B cell (primary cell): ENCODE measurements at regions of chrX and their contacts with region 1.

Region 1: GRCh38 chrX:48917139-48918001 is 1.5 kb downstream of the PIM2 start:
- DNase-seq: peak; percentile 92
- ATAC-seq: peak; percentile 46
- H3K4me3 ChIP-seq: peak overlapping the region; percentile 67 to 94 (median 86)
- H3K4me3 Mint-ChIP-seq: peak overlapping the region; percentile 98
- H3K27ac ChIP-seq: peak overlapping the region; percentile 84
- H3K27ac Mint-ChIP-seq: peak overlapping the region; percentile 96
- H3K4me1 ChIP-seq: peaks cover 34 to 56% of the 10 kb centered on the region in 2 donors
- H3K4me1 Mint-ChIP-seq: peaks cover 51% of the 10 kb centered on the region
- H3K27me3 ChIP-seq: no peaks in the 10 kb centered on the region
- H3K27me3 Mint-ChIP-seq: no peaks in the 10 kb centered on the region
- CTCF ChIP-seq: peak; percentile 74

Region 2: DNA sequence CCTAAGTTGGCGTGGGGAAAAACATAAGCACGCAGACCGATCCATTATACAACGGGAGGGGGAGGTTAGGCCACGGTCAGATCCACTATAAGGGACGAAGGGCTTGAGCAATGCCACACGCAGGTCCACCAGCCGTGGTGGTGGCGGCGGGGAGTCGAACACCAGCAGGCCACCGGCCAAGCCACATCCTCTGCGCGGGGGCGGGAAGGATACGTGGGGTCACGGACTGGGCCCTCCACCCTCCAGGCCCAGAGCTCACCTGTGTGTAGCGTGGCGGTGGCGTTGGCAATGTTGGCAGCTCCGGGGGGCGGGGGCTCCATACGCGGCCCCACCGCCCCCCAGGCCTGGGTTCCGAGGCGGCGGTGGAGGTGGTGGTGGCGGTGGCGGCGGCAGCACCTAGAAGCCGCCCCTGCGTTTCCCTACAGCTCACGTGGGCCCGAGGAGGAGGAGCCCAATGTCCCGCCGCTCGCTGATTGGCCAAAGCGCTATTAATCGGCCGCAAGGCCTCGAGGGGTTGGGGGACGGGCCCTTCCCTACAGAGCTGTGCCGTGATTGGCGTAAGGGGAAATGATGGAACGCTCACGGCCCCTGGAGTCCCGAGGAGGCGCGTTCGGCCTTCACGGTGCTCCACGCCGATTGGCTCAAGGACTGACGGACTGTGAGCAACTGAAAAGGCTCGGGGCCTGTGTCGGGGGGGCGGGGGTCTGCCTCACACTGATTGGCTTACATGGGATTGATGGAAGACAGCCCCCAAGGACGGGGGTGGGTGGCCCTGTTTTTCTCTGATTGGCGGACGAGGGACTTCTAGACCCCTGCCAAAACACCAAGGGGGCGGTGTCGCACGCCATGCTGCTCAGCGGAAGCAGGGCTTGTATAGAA is 1267.0 kb before region 1 on chrX and contains the start of gene ELK1:
- CTCF ChIA-PET with region 1: no interaction called
- POLR2A ChIA-PET with region 1: no interaction called
- intact Hi-C with region 1: loop called (anchors 10 kb)
- DNase-seq: peak; percentile 94
- ATAC-seq: peak; percentile 91
- H3K4me3 ChIP-seq: peak within 1 kb of the TSS in 4 of 5 experiments; percentile 68 to 77 (median 75)
- H3K4me3 Mint-ChIP-seq: peak within 1 kb of the TSS; percentile 93
- H3K27ac ChIP-seq: peak within 1 kb of the TSS; percentile 69 to 73
- H3K27ac Mint-ChIP-seq: peak within 1 kb of the TSS; percentile 94
- H3K4me1 ChIP-seq: peaks cover 11 to 26% of the 10 kb centered on the region in 2 donors
- H3K4me1 Mint-ChIP-seq: peaks cover 29% of the 10 kb centered on the region
- H3K27me3 ChIP-seq: no peaks in the 10 kb centered on the region
- H3K27me3 Mint-ChIP-seq: no peaks in the 10 kb centered on the region
- CTCF ChIP-seq: no peak
- total RNA-seq, gene ELK1: 20.8 and 22.7 TPM in 2 replicates

Region 3: DNA sequence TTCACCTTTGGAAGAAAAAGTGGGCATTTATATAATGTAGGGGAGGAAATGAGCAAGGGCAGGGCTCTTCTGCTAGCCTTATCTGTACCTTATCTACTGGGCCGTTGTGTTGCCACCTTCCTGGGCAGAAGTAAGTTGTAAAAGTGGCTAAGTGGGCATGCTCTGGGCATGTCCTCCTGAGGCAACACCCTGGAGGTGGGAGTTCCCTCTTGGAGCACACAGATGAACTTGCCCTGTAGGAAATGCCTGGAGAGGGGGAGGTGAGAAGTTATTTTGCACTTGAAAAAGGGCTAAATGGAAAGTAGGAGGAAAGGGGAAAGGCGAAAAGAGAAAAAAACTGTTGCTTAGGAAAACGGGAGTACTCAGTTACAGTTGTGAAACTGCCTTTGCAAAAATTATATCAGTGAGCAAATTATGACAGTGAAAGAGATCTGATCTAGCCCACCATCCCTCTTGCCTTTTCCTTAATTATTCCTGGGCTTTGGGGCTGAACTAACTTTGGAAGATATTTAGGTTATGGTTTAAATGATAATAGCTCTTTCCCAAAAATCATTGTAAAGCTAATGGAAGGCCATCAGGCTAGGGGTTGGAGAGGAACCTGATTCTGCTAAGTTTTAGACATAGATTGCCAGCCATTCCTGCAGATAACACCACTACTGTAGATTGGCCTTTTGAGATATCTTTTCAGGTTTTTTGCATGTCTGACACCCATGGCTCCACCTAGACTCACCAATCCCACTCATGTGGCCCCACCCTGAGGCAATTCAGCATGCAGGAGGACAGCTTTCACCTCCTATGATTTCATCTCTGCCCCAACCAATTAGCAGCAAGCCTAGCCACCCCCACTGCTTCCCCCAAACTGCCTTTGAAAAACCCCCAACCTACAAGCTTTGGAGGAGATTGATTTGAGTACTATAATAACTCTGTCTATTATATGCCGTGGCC is 1101.2 kb before region 1 on chrX:
- CTCF ChIA-PET with region 1: no interaction called
- POLR2A ChIA-PET with region 1: no interaction called
- intact Hi-C with region 1: no loop called
- DNase-seq: no peak
- ATAC-seq: no peak
- H3K4me3 ChIP-seq: no peak overlapping the region
- H3K4me3 Mint-ChIP-seq: no peak overlapping the region
- H3K27ac ChIP-seq: no peak overlapping the region
- H3K27ac Mint-ChIP-seq: no peak overlapping the region
- H3K4me1 ChIP-seq: no peaks in the 10 kb centered on the region
- H3K4me1 Mint-ChIP-seq: no peaks in the 10 kb centered on the region
- H3K27me3 ChIP-seq: no peaks in the 10 kb centered on the region
- H3K27me3 Mint-ChIP-seq: peaks cover 9% of the 10 kb centered on the region
- CTCF ChIP-seq: no peak

Region 4: DNA sequence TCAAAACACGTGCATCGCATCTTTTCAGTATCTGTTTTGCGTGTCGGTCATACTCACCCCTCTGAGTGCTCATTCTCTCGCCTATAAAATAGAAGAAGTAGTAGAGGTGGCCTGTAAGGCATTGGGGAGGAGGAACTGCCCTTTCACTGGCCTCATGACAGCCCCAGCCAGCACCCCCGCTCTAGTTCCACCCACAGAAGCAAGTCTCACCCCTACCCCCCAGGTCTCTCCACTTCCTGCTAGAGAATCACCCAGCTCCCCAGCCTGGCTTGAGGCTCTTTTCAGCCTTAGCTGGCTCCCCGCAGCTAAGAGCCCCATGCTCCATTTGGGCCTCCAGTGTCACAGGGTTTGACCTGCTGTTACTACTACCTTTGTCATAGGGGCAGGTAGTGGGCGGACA is 103.7 kb before region 1 on chrX:
- CTCF ChIA-PET with region 1: no interaction called
- POLR2A ChIA-PET with region 1: no interaction called
- intact Hi-C with region 1: no loop called
- DNase-seq: no peak
- ATAC-seq: no peak
- H3K4me3 ChIP-seq: no peak overlapping the region
- H3K4me3 Mint-ChIP-seq: no peak overlapping the region
- H3K27ac ChIP-seq: no peak overlapping the region
- H3K27ac Mint-ChIP-seq: no peak overlapping the region
- H3K4me1 ChIP-seq: no peaks in the 10 kb centered on the region
- H3K4me1 Mint-ChIP-seq: no peaks in the 10 kb centered on the region
- H3K27me3 ChIP-seq: no peaks in the 10 kb centered on the region
- H3K27me3 Mint-ChIP-seq: no peaks in the 10 kb centered on the region
- CTCF ChIP-seq: no peak

Region 5: DNA sequence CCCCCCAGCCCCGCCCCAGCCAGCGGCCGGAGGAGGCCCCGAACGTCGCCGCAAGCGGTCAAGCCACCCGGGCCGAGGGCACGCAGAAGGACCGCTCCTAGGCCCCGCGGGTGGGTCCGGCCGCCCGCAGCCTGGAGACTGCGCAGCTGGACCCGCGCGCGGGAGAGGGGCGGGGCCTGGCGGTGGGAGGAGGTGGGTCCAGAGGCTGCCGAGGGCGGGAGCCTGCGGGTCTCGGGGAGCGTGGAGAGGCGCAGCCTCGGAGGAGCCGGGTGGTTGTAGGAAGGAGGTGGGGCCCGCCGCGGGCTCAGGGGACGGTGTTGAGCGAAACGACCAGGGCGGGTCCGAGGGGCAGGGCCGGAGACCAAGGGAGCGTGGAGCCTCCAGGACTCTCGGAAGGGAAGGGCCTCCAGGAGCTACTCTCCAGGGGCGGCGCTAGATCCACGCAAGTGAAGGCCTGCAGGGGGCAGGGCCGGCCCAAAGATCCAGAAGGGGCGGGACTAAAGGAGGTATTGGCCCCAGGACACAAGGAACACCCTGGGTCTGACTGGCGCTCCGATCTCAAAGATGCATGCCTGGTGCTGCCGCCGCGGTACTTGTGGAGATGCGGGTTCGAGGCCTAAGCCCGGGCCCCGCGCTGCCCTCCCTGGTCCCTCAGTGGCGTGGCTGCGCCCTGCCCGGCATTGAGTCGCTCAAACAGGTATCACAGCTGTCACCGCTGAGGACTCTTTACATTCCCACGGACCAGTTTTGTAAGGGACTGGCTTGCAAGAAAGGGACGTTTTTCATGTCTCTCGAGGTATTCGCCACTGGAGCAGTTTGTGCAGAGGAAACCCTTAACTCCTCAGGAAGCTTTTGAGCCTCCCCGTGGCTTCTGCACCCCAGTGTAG is 25.7 kb before region 1 on chrX:
- CTCF ChIA-PET with region 1: interaction called, 5 read pairs
- POLR2A ChIA-PET with region 1: no interaction called
- intact Hi-C with region 1: loop called (anchors 1 kb)
- DNase-seq: peak; percentile 87
- ATAC-seq: peak; percentile 84
- H3K4me3 ChIP-seq: peak overlapping the region in 4 of 5 experiments; percentile 46 to 65 (median 60)
- H3K4me3 Mint-ChIP-seq: peak overlapping the region; percentile 84
- H3K27ac ChIP-seq: peak overlapping the region in 1 of 2 donors; percentile 48
- H3K27ac Mint-ChIP-seq: peak overlapping the region; percentile 73
- H3K4me1 ChIP-seq: peaks cover 6 to 9% of the 10 kb centered on the region in 2 donors
- H3K4me1 Mint-ChIP-seq: peaks cover 19% of the 10 kb centered on the region
- H3K27me3 ChIP-seq: no peaks in the 10 kb centered on the region
- H3K27me3 Mint-ChIP-seq: no peaks in the 10 kb centered on the region
- CTCF ChIP-seq: peak; percentile 60

Region 6: DNA sequence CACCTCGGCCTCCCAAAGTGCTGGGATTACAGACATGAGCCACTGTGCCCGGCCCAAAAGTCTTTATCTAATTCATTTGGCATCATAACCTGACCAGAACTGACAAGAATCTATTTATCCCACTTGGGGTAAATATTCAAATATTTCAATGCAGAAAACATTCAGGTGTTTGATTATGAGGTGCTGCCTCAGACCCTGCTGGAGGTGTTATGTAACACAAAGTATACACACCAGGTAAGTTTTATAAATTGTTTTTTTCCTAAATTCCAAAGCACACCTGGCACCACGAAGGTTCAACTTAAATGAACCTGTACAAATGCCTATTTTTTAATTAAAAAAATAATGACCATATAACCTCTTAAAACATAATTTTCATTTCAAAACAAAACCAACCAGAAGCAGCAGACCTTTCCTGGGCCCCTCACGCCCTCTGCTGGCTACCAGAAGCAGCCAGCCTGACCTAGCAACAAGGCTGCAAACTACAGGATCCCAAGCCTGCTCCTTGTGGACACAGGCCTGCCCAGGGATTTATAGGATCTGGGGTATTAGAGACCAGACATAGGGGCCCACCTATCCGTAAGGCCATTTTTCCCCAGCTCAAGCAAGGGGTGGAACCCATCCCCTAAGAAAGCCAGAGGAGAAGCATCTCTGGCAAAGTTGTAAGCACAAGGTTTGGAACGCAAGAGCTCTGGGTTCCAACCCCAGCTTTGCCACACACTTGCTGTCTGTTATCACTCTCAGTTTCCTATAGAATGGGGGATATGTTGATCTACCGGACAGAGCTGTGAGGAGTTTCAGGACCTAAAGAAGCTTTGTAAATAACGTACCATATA is 28.4 kb after region 1 on chrX:
- CTCF ChIA-PET with region 1: interaction called, 6 read pairs
- POLR2A ChIA-PET with region 1: interaction called, 29 read pairs
- intact Hi-C with region 1: loop called (anchors 1 kb)
- DNase-seq: peak; percentile 65
- ATAC-seq: peak; percentile 65
- H3K4me3 ChIP-seq: no peak overlapping the region
- H3K4me3 Mint-ChIP-seq: no peak overlapping the region
- H3K27ac ChIP-seq: no peak overlapping the region
- H3K27ac Mint-ChIP-seq: peak overlapping the region; percentile 20
- H3K4me1 ChIP-seq: peaks cover 23 to 39% of the 10 kb centered on the region in 2 donors
- H3K4me1 Mint-ChIP-seq: peaks cover 43% of the 10 kb centered on the region
- H3K27me3 ChIP-seq: no peaks in the 10 kb centered on the region
- H3K27me3 Mint-ChIP-seq: no peaks in the 10 kb centered on the region
- CTCF ChIP-seq: peak; percentile 83